Activated B cell treated with CpG ODN at 0.5 μM for 24 hours (primary cell): ENCODE measurements at regions of chr1 and their contacts with region 1.

Region 1: GRCh38 chr1:241611063-241611462 is 29.1 kb downstream of the CHML start:
- DNase-seq: no peak
- ATAC-seq: peak; percentile 96
- H3K4me3 Mint-ChIP-seq: no peak overlapping the region
- H3K27ac Mint-ChIP-seq: no peak overlapping the region
- H3K4me1 Mint-ChIP-seq: peaks cover 8% of the 10 kb centered on the region
- H3K27me3 Mint-ChIP-seq: no peaks in the 10 kb centered on the region
- CTCF ChIP-seq: no peak

Region 2: DNA sequence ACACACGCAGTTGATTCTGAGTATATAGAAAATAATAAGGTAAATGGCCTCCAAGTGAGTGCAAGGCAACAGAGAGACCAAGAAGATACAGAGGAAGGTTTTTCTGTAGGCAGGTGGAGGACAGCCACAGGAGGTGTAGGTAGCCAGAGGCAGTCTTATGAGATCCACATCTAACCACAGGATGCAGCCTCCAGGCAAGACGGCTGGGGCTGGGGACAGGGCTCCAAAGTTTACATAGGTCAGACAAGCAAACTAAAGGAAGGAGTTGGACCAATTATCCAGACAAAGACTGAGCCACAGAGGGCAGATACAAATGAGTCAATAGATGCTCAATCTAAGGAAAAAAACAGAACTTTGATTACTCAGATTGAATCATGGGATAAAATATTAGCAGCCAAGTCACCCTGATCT is 345.7 kb before region 1 on chr1:
- CTCF ChIA-PET with region 1: no interaction called
- POLR2A ChIA-PET with region 1: no interaction called
- intact Hi-C with region 1: no loop called
- DNase-seq: no peak
- ATAC-seq: no peak
- H3K4me3 Mint-ChIP-seq: no peak overlapping the region
- H3K27ac Mint-ChIP-seq: no peak overlapping the region
- H3K4me1 Mint-ChIP-seq: no peaks in the 10 kb centered on the region
- H3K27me3 Mint-ChIP-seq: no peaks in the 10 kb centered on the region
- CTCF ChIP-seq: no peak

Region 3: GRCh38 chr1:241600496-241600901 is 10.6 kb before region 1 on chr1:
- CTCF ChIA-PET with region 1: interaction called, 8 read pairs
- POLR2A ChIA-PET with region 1: no interaction called
- intact Hi-C with region 1: loop called (anchors 1 kb)
- DNase-seq: no peak
- ATAC-seq: peak; percentile 64
- H3K4me3 Mint-ChIP-seq: peak overlapping the region; percentile 9
- H3K27ac Mint-ChIP-seq: peak overlapping the region; percentile 78
- H3K4me1 Mint-ChIP-seq: peaks cover 74% of the 10 kb centered on the region
- H3K27me3 Mint-ChIP-seq: no peaks in the 10 kb centered on the region
- CTCF ChIP-seq: no peak

Region 4: GRCh38 chr1:241834733-241835377 is 223.8 kb after region 1 on chr1:
- CTCF ChIA-PET with region 1: interaction called, 7 read pairs
- POLR2A ChIA-PET with region 1: interaction called, 3 read pairs
- intact Hi-C with region 1: loop called (anchors 1 kb)
- DNase-seq: no peak
- ATAC-seq: no peak
- H3K4me3 Mint-ChIP-seq: no peak overlapping the region
- H3K27ac Mint-ChIP-seq: no peak overlapping the region
- H3K4me1 Mint-ChIP-seq: peaks cover 10% of the 10 kb centered on the region
- H3K27me3 Mint-ChIP-seq: no peaks in the 10 kb centered on the region
- CTCF ChIP-seq: no peak

Region 5: GRCh38 chr1:241895013-241895412 is 283.9 kb after region 1 on chr1:
- CTCF ChIA-PET with region 1: interaction called, 4 read pairs
- POLR2A ChIA-PET with region 1: no interaction called
- intact Hi-C with region 1: loop called (anchors 1 kb)
- DNase-seq: no peak
- ATAC-seq: no peak
- H3K4me3 Mint-ChIP-seq: no peak overlapping the region
- H3K27ac Mint-ChIP-seq: no peak overlapping the region
- H3K4me1 Mint-ChIP-seq: peaks cover 15% of the 10 kb centered on the region
- H3K27me3 Mint-ChIP-seq: no peaks in the 10 kb centered on the region
- CTCF ChIP-seq: no peak

Region 6: GRCh38 chr1:241998412-241998921 is 387.4 kb after region 1 on chr1:
- CTCF ChIA-PET with region 1: interaction called, 50 read pairs
- POLR2A ChIA-PET with region 1: no interaction called
- intact Hi-C with region 1: loop called (anchors 1 kb)
- DNase-seq: peak; percentile 52
- ATAC-seq: peak; percentile 88
- H3K4me3 Mint-ChIP-seq: peak overlapping the region; percentile 80
- H3K27ac Mint-ChIP-seq: no peak overlapping the region
- H3K4me1 Mint-ChIP-seq: peaks cover 5% of the 10 kb centered on the region
- H3K27me3 Mint-ChIP-seq: peaks cover 5% of the 10 kb centered on the region
- CTCF ChIP-seq: no peak